ENCODE measurements at regions of chr17 and their contacts with region 1.

Region 1: GRCh38 chr17:41322094-41322902 is 6.8 kb upstream of the KRTAP17-1 start:
- DNase-seq: peak; percentile 71
- ATAC-seq: peak; percentile 64
- H3K4me3 ChIP-seq: no peak overlapping the region
- H3K4me3 Mint-ChIP-seq: no peak overlapping the region
- H3K27ac ChIP-seq: no peak overlapping the region
- H3K27ac Mint-ChIP-seq: no peak overlapping the region
- H3K4me1 ChIP-seq: peaks cover 0 to 4% of the 10 kb centered on the region in 2 donors
- H3K4me1 Mint-ChIP-seq: peaks cover 3% of the 10 kb centered on the region
- H3K27me3 ChIP-seq: peaks cover 0 to 3% (median 0%) of the 10 kb centered on the region in 4 experiments
- H3K27me3 Mint-ChIP-seq: no peaks in the 10 kb centered on the region
- CTCF ChIP-seq: peak; percentile 84

Region 2: DNA sequence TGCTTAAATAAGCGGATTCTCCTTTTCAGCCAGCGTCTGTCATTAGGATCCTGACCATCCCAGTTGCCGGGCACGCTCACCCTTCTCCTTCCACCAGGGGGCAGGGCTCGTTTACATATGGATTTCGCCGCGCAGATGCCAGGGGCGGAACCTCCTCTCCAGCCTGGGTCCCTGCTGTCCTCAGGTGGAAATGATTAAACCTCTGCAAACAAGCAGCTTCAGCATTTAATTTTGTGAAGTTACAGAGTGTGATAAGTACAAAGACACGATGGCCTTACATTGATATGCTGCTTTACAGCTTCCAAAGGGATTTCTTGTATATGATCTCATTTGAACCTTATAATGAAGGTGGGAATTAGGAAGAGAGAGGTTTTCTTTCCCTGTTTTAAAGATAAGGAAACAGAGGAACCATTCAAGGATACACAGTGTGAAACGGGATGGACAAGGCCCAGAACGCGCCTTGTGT is 518.6 kb before region 1 on chr17:
- CTCF ChIA-PET with region 1: interaction called, 4 read pairs
- POLR2A ChIA-PET with region 1: no interaction called
- intact Hi-C with region 1: loop called (anchors 10 kb)
- DNase-seq: peak; percentile 79
- ATAC-seq: peak; percentile 93
- H3K4me3 ChIP-seq: no peak overlapping the region
- H3K4me3 Mint-ChIP-seq: no peak overlapping the region
- H3K27ac ChIP-seq: no peak overlapping the region
- H3K27ac Mint-ChIP-seq: no peak overlapping the region
- H3K4me1 ChIP-seq: peaks cover 0 to 4% of the 10 kb centered on the region in 2 donors
- H3K4me1 Mint-ChIP-seq: peaks cover 3% of the 10 kb centered on the region
- H3K27me3 ChIP-seq: peaks cover 0 to 47% (median 28%) of the 10 kb centered on the region in 4 experiments
- H3K27me3 Mint-ChIP-seq: peaks cover 48% of the 10 kb centered on the region
- CTCF ChIP-seq: peak; percentile 94

Region 3: DNA sequence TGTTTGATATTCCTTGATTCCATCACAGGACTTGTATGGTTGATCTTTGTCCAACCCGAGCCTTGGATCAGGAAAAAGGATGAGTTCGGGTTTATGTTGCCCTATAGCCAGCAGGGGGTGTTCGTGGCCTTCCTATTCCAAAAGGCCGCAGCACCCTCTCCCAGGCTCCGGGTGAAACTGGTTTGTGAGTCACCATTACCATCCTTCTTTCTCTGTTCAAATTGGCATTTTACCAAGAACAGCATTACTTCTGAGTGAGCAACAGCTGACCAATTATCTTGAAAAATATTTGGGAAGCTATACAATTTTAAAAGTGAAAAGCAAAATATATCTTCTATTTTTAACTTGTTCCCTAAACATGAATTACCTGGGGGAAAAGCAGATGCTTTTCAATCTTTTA is 412.9 kb before region 1 on chr17:
- CTCF ChIA-PET with region 1: interaction called, 16 read pairs
- POLR2A ChIA-PET with region 1: no interaction called
- intact Hi-C with region 1: loop called (anchors 1 kb)
- DNase-seq: peak; percentile 78
- ATAC-seq: peak; percentile 70
- H3K4me3 ChIP-seq: no peak overlapping the region
- H3K4me3 Mint-ChIP-seq: no peak overlapping the region
- H3K27ac ChIP-seq: no peak overlapping the region
- H3K27ac Mint-ChIP-seq: no peak overlapping the region
- H3K4me1 ChIP-seq: no peaks in the 10 kb centered on the region
- H3K4me1 Mint-ChIP-seq: no peaks in the 10 kb centered on the region
- H3K27me3 ChIP-seq: peaks cover 0 to 17% (median 5%) of the 10 kb centered on the region in 4 experiments
- H3K27me3 Mint-ChIP-seq: peaks cover 49% of the 10 kb centered on the region
- CTCF ChIP-seq: peak; percentile 76

Region 4: GRCh38 chr17:41308251-41308917 is 13.9 kb before region 1 on chr17:
- CTCF ChIA-PET with region 1: interaction called, 24 read pairs
- POLR2A ChIA-PET with region 1: no interaction called
- intact Hi-C with region 1: loop called (anchors 1 kb)
- DNase-seq: peak; percentile 87
- ATAC-seq: peak; percentile 85
- H3K4me3 ChIP-seq: peak overlapping the region in 4 of 5 experiments; percentile 13 to 36 (median 26)
- H3K4me3 Mint-ChIP-seq: peak overlapping the region; percentile 78
- H3K27ac ChIP-seq: peak overlapping the region; percentile 86
- H3K27ac Mint-ChIP-seq: peak overlapping the region; percentile 94
- H3K4me1 ChIP-seq: peaks cover 34% of the 10 kb centered on the region in 2 donors
- H3K4me1 Mint-ChIP-seq: peaks cover 45% of the 10 kb centered on the region
- H3K27me3 ChIP-seq: peaks cover 0 to 3% (median 0%) of the 10 kb centered on the region in 4 experiments
- H3K27me3 Mint-ChIP-seq: no peaks in the 10 kb centered on the region
- CTCF ChIP-seq: no peak